A549 (cell line): ENCODE measurements at regions of chr5 and their contacts with region 1.

Region 1: DNA sequence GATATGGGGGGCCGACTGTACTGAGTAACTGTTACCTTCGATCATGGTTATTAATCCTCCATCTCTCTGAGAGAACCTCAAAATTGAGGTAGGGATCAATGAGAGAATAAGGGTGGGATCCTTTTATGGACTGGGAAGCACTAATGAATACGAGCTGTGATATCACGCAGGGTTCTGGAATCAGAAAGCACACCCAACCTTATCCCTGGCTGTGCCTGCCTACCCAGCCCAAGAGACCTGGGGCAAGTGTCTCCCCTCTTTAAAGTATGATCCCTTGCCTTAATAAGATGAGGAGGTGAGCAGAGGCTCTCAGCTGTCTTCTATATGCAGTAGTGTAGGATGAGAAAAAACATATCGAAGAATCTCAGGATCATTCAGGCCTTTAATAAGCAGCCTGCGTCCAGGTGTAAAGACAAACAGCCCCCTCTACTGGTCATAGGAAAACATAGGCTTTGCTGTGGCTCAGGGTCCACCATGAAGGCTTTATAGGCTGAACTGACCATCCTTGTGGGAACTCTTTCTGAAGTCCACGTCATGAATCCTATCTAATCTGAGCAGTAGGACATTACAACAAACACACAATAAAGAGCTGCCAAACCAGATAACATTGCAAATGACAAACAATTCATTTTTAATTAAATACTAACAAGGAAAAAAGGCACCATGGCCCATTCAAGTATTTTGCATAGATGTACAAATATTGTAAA is 16.8 kb downstream of the NIPAL4 start:
- DNase-seq: peak; percentile 78 to 87
- ATAC-seq: peak; percentile 84 to 92
- H3K4me3 ChIP-seq: no peak overlapping the region
- H3K27ac ChIP-seq: peak overlapping the region in 1 of 2 experiments; percentile 49; a peak in 1 of 6 replicates
- H3K4me1 ChIP-seq: peaks cover 22% of the 10 kb centered on the region
- CTCF ChIP-seq: peak; percentile 94
- EP300 ChIP-seq: no peak
- POLR2A ChIP-seq: no peak
- RAD21 ChIP-seq: peak; percentile 94 to 97

Region 2: GRCh38 chr5:157283434-157283833 is 193.4 kb before region 1 on chr5:
- CTCF ChIA-PET with region 1: no interaction called
- POLR2A ChIA-PET with region 1: no interaction called
- DNase-seq: no peak
- ATAC-seq: no peak
- H3K4me3 ChIP-seq: no peak overlapping the region
- H3K27ac ChIP-seq: no peak overlapping the region
- H3K4me1 ChIP-seq: no peaks in the 10 kb centered on the region
- CTCF ChIP-seq: no peak
- EP300 ChIP-seq: no peak
- POLR2A ChIP-seq: no peak
- RAD21 ChIP-seq: no peak

Region 3: GRCh38 chr5:157342822-157343402 is 133.9 kb before region 1 on chr5:
- CTCF ChIA-PET with region 1: interaction called, 29 read pairs
- POLR2A ChIA-PET with region 1: no interaction called
- DNase-seq: peak; percentile 56 to 71
- ATAC-seq: peak; percentile 75 to 97; a peak in 5 of 6 replicates
- H3K4me3 ChIP-seq: no peak overlapping the region
- H3K27ac ChIP-seq: no peak overlapping the region
- H3K4me1 ChIP-seq: no peaks in the 10 kb centered on the region
- CTCF ChIP-seq: peak; percentile 52
- EP300 ChIP-seq: no peak
- POLR2A ChIP-seq: no peak
- RAD21 ChIP-seq: peak; percentile 53 to 57

Region 4: DNA sequence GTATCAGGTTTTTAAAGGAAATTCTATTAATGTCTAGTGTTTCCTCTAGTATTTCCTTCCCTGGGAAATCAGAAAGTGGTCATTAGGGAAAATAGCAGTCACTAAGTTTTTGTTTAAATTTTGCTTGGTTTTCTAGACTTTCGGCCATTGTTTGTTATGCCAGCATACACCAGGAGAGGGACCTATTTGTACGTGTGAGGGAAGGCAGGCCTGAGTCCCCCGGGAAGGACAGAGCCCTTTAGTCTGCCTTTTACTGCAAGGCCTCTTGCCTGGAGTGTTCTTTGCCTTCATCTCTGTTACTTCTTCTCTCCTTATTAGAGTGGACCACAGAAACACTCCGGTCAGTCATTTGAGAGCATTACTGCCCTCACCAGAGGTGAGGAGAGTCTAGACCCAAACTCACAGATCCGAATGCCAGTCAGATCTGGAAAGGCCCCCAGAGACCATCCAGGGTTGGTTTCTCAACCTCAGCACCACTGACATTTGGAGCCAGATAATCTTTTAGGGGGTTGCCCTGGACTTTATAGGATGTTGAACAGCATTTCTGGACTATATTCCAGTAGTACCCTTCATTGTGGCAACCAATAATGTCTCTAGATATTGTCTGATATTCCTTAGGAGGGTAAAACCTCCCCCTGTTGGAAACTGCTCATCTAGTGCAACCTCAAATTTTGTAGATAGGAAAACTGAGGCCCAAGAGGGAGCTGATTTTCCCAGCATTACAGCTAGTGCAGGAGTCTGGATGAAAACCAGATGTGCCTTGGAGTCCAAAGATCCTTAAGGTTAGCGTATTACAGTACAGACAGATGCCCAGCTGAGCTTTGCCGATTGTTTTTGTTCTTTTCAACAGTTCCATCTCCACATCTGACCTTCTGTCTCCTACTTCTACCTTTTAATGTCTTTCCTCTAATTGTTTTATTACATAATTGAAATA is 109.8 kb before region 1 on chr5:
- CTCF ChIA-PET with region 1: interaction called, 35 read pairs
- POLR2A ChIA-PET with region 1: no interaction called
- DNase-seq: peak; percentile 52 to 74
- ATAC-seq: peak; percentile 76 to 93
- H3K4me3 ChIP-seq: no peak overlapping the region
- H3K27ac ChIP-seq: peak overlapping the region; percentile 1 to 64; a peak in 3 of 6 replicates
- H3K4me1 ChIP-seq: peaks cover 18% of the 10 kb centered on the region
- CTCF ChIP-seq: peak; percentile 59
- EP300 ChIP-seq: no peak
- POLR2A ChIP-seq: no peak
- RAD21 ChIP-seq: peak; percentile 87 to 96

Region 5: DNA sequence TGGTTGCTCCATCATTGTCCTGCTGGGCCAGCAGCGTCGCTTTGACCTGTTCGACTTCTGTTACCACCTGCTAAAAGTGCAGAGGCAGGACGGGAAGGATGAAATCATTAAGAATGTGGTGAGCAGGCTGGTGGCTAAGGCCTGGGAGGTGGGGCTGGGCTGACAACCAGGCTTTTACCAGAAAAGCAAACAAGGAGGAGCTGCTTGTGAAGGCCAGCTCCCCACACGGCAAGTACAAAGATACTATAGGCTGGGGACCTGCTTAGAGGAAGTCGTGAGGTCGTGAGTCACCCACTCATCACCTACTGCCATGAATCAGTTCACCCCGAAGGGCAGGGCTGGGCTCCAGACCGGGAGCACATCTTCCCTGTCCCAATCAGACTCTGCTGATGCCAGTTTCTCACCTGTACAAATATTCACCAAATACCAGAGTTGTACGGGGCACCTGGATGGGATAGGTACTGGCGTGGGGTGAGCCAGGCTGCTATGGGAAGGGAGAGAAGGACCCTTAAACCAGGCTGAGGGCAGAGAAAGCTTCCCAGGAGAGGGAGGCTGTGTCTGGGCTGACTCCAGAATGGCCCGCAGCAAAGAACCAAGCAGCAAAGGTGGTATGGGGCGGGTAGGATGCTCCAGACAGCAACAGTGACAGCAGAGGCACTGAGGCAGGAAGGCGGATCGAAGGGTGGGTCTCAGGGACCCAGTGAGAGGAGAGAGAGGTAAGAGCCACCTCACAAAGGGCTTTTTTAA is 86.1 kb before region 1 on chr5:
- CTCF ChIA-PET with region 1: interaction called, 25 read pairs
- POLR2A ChIA-PET with region 1: no interaction called
- DNase-seq: peak; percentile 98 to 99
- ATAC-seq: peak; percentile 95 to 96
- H3K4me3 ChIP-seq: no peak overlapping the region
- H3K27ac ChIP-seq: peak overlapping the region; percentile 81 to 93
- H3K4me1 ChIP-seq: peaks cover 58% of the 10 kb centered on the region
- CTCF ChIP-seq: no peak
- EP300 ChIP-seq: peak; percentile 67 to 75; a peak in 1 of 5 replicates
- POLR2A ChIP-seq: no peak
- RAD21 ChIP-seq: peak in 1 of 2 experiments; percentile 24; a peak in 1 of 5 replicates

Region 6: DNA sequence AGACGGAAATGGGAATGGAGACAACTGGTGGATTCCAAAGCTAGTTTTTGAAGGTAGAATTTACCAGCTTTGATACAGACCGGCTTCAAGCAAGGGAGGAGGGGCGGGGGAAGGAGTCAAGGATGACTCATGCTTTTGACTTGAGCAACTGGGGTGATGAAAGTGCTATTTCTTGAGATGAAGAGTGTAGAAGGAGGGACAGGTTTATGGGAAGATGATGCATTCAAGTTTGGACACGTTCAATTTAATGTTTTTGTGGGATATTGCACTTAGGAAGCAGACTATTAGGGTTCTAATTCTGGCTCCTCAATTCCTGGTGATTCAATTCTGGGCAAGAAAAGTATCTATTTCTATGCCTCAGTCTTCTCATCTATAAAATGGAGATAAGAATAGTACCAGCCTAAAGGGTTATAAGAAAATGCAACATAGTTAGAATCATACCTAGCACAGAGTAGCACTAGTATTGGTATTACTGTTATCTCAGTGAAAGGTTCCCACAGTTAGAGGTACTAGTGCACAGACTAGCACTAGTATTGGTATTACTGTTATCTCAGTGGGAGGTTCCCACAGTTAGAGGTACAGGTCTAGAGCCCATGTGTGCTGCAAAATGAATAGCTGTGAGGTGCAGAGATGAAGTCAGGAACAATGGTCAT is 12.2 kb before region 1 on chr5:
- CTCF ChIA-PET with region 1: interaction called, 96 read pairs
- POLR2A ChIA-PET with region 1: interaction called, 4 read pairs
- DNase-seq: peak; percentile 69 to 80
- ATAC-seq: peak; percentile 59 to 75
- H3K4me3 ChIP-seq: 0 out of 3 replicates have a peak overlapping the region, but pooled peaks have one; percentile 6
- H3K27ac ChIP-seq: peak overlapping the region; percentile 77 to 80
- H3K4me1 ChIP-seq: peaks cover 52% of the 10 kb centered on the region
- CTCF ChIP-seq: no peak
- EP300 ChIP-seq: peak in 1 of 2 experiments; percentile 35; a peak in 1 of 5 replicates
- POLR2A ChIP-seq: no peak
- RAD21 ChIP-seq: 0 out of 5 replicates have a peak, but pooled peaks have one; percentile 6 to 14

Region 7: GRCh38 chr5:157743163-157744050 is 266.6 kb after region 1 on chr5 and contains the start of gene LSM11:
- CTCF ChIA-PET with region 1: interaction called, 13 read pairs
- POLR2A ChIA-PET with region 1: no interaction called
- DNase-seq: peak; percentile 80 to 82
- ATAC-seq: peak; percentile 86 to 94
- H3K4me3 ChIP-seq: peak within 1 kb of the TSS; percentile 100
- H3K27ac ChIP-seq: peak within 1 kb of the TSS; percentile 84 to 95
- H3K4me1 ChIP-seq: peaks cover 13% of the 10 kb centered on the region; the same call in 2 of the 3 replicates
- CTCF ChIP-seq: peak; percentile 99
- EP300 ChIP-seq: no peak
- POLR2A ChIP-seq: no peak
- RAD21 ChIP-seq: peak; percentile 68 to 91
- polyA plus RNA-seq, gene LSM11: 3.7 and 4.1 TPM in 2 replicates